Activated CD4-positive, alpha-beta T cell treated with anti-CD3 and anti-CD28 coated beads for 36 hours (primary cell): ENCODE measurements at regions of chr15 and their contacts with region 1.

Region 1: GRCh38 chr15:40470423-40471104 is at the start of gene CHST14:
- DNase-seq: peak; percentile 64
- ATAC-seq: peak; percentile 58
- H3K4me3 Mint-ChIP-seq: peak within 1 kb of the TSS; percentile 76
- H3K27ac Mint-ChIP-seq: peak within 1 kb of the TSS; percentile 74
- H3K4me1 Mint-ChIP-seq: peaks cover 23% of the 10 kb centered on the region
- H3K27me3 Mint-ChIP-seq: no peaks in the 10 kb centered on the region
- total RNA-seq, gene CHST14: 5.4 to 6.2 TPM

Region 2: DNA sequence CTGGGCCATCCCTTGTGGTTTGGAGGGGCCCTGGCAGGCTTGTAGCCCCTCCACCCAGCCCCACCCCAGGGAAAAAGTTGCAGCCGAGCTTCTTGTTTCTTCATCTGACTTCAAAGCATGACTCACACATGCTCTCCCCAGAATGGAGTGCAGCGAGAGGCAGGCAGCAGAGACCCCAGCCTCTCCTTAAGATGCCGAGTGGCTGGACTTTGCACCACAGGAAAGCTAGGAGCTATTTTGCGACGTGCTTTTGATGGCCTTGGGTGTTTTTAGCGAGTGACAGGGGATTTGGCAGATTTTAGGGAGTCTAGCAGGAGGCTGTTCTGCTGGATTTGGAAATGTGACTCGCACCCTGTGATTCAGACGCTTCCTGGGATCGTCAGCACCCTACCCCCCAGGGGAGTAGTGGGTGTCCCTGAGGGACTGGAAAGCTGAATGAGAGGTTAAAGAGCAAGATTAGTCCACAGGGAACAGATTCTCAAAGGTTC is 15.6 kb before region 1 on chr15:
- CTCF ChIA-PET with region 1: interaction called, 3 read pairs
- POLR2A ChIA-PET with region 1: interaction called, 3 read pairs
- intact Hi-C with region 1: loop called in 1 of 2 experiments (anchors 2 kb)
- DNase-seq: peak; percentile 58
- ATAC-seq: peak; percentile 55
- H3K4me3 Mint-ChIP-seq: no peak overlapping the region
- H3K27ac Mint-ChIP-seq: peak overlapping the region; percentile 82
- H3K4me1 Mint-ChIP-seq: peaks cover 72% of the 10 kb centered on the region
- H3K27me3 Mint-ChIP-seq: no peaks in the 10 kb centered on the region